ENCODE measurements at regions of chr5 and their contacts with region 1.

Region 1: DNA sequence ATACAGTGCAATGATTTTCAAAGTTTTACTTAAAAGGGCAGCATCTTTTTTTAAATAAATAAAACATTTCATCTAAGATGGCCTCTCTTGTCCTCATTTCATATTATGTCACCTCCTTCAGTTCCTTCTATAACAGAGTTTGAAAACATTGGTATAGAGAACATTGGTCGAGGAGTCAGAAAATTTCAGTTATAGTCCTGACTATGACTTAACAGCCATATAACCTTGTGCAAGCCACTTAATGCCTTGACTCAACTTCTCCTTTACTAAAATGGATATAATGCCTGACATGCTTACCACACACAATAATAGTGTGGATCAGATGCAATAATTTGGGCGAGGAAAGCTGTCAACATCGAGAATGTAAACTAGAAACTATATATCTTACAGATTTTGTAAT is 22.6 kb downstream of the SSBP2 start:
- DNase-seq: no peak
- H3K4me3 Mint-ChIP-seq: no peak overlapping the region
- H3K27ac Mint-ChIP-seq: no peak overlapping the region
- H3K4me1 Mint-ChIP-seq: peaks cover 53% of the 10 kb centered on the region
- H3K27me3 Mint-ChIP-seq: no peaks in the 10 kb centered on the region

Region 2: DNA sequence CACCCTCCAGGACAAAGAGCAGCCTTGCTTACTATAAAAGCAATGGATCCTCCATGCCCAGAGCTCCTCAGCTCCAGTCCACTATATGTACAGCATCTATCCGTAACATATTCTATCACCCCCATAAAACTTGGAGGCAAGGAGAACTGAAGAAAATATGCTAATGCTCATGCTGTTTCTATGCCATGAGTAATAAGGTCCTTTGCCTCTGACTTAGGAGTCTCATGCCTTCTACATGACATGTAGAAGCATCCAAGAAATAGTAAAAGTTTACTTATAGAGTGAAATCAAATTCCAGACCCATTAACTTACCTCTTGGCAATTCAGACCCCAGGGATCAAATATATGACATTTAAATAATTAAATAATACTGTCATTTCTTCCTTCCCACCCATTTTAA is 11.1 kb before region 1 on chr5:
- CTCF ChIA-PET with region 1: no interaction called
- intact Hi-C with region 1: loop called (anchors 1 kb)
- DNase-seq: no peak
- H3K4me3 Mint-ChIP-seq: no peak overlapping the region
- H3K27ac Mint-ChIP-seq: no peak overlapping the region
- H3K4me1 Mint-ChIP-seq: peaks cover 57% of the 10 kb centered on the region
- H3K27me3 Mint-ChIP-seq: no peaks in the 10 kb centered on the region

Region 3: DNA sequence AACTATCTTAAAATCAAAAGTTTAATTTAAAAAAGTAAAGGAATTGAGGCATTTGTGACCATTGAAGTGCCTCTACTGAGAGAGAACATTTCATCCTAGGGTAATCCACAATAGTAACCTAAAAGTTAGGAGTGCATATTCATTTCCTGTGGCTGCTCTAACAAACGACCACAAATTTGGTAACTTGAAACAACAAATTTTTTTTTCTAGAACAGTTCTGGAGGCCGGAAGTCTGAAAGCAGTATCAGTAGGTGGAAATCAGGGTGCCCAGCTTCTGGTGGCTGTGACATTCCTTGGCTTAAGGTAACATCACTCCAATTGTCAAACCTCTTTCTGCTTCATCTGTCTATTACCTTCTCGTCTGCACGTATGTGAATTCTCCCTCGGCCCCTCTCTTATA is 89.7 kb after region 1 on chr5:
- CTCF ChIA-PET with region 1: no interaction called
- intact Hi-C with region 1: no loop called
- DNase-seq: no peak
- H3K4me3 Mint-ChIP-seq: no peak overlapping the region
- H3K27ac Mint-ChIP-seq: no peak overlapping the region
- H3K4me1 Mint-ChIP-seq: peaks cover 34% of the 10 kb centered on the region
- H3K27me3 Mint-ChIP-seq: no peaks in the 10 kb centered on the region